PC-3 (cell line): ENCODE measurements at regions of chr9 and their contacts with region 1.

Region 1: DNA sequence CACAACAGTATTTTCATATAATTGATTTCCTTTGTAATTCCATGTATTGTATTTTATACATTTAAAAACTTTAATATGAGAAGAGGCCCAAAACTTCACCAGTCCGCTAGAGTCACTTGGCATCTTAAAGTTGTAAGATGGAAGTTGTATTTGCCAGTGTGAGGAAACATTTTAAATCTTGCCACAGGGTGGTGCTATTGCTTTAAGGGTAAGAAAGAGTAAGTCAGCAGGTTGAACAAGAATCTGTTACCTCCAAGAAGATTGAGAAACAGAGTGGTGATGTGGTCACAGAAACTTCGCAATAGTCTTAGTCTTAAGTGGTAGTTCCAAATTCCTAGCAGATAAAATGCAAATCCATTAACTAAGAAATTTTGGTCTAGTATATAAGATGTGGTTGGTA is 39.8 kb upstream of the RANBP6 start:
- DNase-seq: peak; percentile 90
- ATAC-seq: peak; percentile 83
- H3K4me3 ChIP-seq: no peak overlapping the region
- H3K27ac ChIP-seq: peak overlapping the region; percentile 61
- H3K4me1 ChIP-seq: peaks cover 15% of the 10 kb centered on the region
- H3K27me3 ChIP-seq: no peaks in the 10 kb centered on the region
- CTCF ChIP-seq: peak; percentile 66

Region 2: DNA sequence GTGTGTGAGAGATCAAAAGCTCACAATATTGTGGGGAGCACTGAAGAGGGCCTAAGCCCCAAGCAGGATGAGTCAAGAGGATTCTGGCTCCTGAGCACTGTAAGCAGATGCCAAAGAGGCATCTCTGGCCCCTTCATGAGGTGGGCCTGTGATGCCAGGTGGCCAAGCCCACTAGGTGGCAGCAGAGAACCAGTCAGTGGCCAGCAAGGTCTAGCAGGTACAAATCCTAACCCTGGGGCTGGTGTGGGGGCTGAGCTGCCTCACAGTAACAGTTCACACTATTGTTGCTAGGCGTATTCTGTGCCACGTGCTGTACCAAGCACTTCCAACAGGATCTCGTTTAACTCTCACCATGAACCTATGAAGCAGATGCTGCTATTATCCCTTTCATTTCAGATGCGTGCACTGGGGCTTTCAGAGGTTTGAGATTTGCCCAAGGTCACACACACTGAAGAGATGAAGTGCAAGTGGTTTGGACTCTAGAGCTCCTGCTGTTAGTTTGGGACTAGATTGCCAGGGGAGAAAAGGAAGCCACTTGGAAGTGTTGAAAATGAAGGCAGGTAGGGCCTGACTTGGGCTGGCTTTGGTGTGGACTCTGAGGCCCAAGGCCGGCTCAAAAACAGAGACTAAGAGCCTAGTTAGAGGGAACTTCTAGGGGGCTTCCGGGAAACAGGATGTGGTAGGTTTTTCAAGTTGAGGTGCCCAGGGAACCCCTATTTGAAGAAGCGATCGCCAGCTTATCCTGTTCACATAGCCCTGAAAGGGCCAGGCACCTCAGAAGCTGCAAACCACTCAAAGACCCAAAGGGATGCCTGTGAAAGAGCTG is 168.9 kb before region 1 on chr9:
- CTCF ChIA-PET with region 1: interaction called, 6 read pairs
- POLR2A ChIA-PET with region 1: no interaction called
- intact Hi-C with region 1: loop called (anchors 1 kb)
- DNase-seq: peak; percentile 73
- ATAC-seq: peak; percentile 97
- H3K4me3 ChIP-seq: no peak overlapping the region
- H3K27ac ChIP-seq: no peak overlapping the region
- H3K4me1 ChIP-seq: peaks cover 10% of the 10 kb centered on the region; the same call in 1 of the 2 replicates
- H3K27me3 ChIP-seq: no peaks in the 10 kb centered on the region
- CTCF ChIP-seq: peak; percentile 88

Region 3: GRCh38 chr9:6086006-6086655 is 30.9 kb after region 1 on chr9:
- CTCF ChIA-PET with region 1: no interaction called
- POLR2A ChIA-PET with region 1: no interaction called
- intact Hi-C with region 1: no loop called
- DNase-seq: no peak
- ATAC-seq: no peak
- H3K4me3 ChIP-seq: no peak overlapping the region
- H3K27ac ChIP-seq: no peak overlapping the region
- H3K4me1 ChIP-seq: no peaks in the 10 kb centered on the region
- H3K27me3 ChIP-seq: no peaks in the 10 kb centered on the region
- CTCF ChIP-seq: no peak

Region 4: DNA sequence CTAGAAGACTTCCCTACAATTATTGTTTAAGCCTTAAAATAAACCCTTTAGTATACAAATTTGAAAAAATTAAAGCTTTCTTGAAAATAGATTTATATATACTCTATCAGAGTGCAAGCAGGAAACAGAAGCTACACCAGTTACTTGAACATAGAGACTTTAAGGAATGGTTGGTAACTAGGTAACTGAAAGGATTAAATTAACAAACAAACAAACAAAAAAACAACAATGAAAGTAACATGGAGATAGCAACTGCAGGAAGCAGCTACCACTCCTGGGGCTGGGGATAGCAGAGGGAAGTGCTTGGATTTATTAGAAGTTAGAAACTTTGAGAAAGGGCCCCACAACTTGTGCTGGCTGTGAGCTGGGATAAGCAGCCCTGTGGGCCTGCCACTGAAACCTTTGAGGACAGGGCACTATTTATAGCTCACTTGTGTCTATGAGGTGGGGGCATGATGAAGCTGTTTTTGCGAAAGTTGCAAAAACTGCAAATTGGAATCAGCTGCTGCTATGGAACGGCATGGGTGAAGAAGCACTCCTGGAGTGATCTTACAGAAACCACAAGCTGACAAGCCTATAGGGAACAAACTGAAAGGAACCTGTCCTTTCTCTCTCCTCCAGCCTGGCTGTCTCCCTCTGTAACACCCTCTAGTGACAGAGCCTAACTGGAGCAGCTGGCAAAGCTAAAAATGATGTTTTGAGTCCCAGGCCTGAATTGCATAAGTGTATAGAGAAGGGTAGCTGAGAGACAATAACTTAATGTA is 51.5 kb after region 1 on chr9:
- CTCF ChIA-PET with region 1: interaction called, 3 read pairs
- POLR2A ChIA-PET with region 1: no interaction called
- intact Hi-C with region 1: loop called (anchors 2 kb)
- DNase-seq: peak; percentile 60
- ATAC-seq: peak; percentile 66
- H3K4me3 ChIP-seq: peak overlapping the region; percentile 30; the same call in 1 of the 2 replicates
- H3K27ac ChIP-seq: peak overlapping the region; percentile 84
- H3K4me1 ChIP-seq: peaks cover 44% of the 10 kb centered on the region
- H3K27me3 ChIP-seq: no peaks in the 10 kb centered on the region
- CTCF ChIP-seq: peak; percentile 61

Region 5: DNA sequence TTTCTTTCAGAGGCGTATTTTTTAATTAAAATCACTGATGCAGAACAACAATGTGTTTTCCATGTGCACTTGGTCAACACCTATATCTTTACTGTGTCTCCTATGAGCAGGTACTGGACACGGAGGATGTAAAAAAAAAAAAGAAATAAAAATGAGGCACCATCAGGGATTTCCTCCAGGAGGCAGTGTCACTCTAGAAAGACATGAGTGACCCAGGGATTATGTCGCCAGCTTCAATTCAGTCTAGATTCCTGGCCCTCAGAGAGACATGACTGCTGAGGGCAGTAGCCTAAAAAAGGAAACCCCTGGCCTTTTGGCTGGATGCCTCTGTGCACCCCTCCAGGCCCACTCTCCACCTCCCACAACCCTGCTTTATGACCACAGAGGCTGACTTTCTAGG is 142.1 kb after region 1 on chr9:
- CTCF ChIA-PET with region 1: no interaction called
- POLR2A ChIA-PET with region 1: no interaction called
- intact Hi-C with region 1: loop called (anchors 5 kb)
- DNase-seq: peak; percentile 50
- ATAC-seq: no peak
- H3K4me3 ChIP-seq: no peak overlapping the region
- H3K27ac ChIP-seq: peak overlapping the region; percentile 96
- H3K4me1 ChIP-seq: peaks cover 53% of the 10 kb centered on the region
- H3K27me3 ChIP-seq: no peaks in the 10 kb centered on the region
- CTCF ChIP-seq: peak; percentile 53

Region 6: DNA sequence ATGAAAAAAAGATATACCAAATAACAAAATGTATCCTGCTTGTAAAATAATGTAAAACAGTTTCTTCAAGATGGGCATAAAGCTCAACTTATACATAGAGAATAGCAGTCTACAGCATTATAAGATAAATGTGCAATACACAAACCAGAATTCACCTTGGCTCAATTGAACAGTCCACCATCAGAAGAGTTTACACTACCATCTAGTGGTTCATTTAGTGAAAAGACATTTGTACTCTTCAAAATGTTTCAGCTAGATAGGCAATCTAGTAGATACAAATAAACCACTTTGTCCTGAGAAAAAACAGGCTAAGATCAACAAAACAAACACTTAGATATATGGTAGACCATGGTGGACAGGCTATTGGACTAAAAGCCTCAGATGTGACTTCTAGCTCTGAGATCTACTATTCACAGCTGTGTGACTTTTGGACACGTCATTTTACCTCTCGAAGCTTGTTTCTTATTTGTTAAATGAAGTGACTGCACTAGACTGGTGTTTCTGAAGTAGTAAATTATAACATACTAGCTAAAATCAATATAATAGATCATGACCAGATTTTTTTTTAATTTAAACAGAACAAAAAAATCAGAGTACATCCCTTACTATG is 250.8 kb after region 1 on chr9:
- CTCF ChIA-PET with region 1: interaction called, 18 read pairs
- POLR2A ChIA-PET with region 1: no interaction called
- intact Hi-C with region 1: loop called (anchors 1 kb)
- DNase-seq: peak; percentile 69
- ATAC-seq: peak; percentile 81
- H3K4me3 ChIP-seq: no peak overlapping the region
- H3K27ac ChIP-seq: peak overlapping the region; percentile 47; the same call in 1 of the 2 replicates
- H3K4me1 ChIP-seq: peaks cover 19% of the 10 kb centered on the region
- H3K27me3 ChIP-seq: no peaks in the 10 kb centered on the region
- CTCF ChIP-seq: peak; percentile 72